ENCODE measurements at regions of chr11 and their contacts with region 1.

Region 1: DNA sequence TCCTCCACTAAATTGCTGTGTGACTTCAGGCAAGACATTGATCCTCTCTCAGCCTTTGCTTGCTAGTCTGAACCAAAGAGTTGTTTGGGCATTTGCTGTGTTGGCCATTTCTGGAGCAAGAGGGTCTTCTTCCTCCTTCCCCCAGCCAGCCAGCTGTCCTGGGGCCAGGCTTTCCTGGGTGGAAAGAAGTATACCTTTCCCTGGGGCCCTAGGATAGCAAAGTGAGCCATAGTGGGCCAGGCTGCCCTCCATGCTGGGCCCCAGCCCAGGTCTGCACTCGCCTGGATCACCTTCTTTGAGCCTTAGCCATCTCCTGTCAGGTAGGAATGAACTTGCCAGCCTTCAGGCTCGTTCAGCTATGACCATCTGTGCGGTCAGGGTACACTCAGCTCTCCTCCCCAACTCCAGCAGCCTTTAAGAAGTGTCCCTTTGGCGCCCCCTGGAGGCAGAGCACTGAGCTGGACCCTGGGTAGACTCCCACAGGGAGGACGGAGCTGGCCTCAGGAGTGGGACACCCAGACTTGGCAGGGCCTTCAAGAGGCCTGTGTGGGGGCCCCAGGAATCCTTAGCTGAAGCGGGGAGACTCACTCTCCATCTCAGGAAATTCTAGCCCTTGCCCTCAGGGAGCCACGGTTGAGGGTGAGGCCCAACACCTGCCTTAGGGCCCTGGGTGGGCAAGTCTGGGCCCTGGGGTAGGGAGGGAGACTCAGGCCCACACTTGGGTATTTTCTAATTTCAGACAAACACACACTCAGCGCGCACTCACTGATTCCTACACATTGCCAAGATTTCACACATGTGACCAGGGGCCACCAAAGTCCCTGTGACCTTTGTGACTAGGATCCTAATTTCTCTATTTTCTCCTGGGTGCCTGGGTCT is 35.6 kb upstream of the TPBGL start:
- DNase-seq: peak; percentile 95 to 97
- H3K4me3 ChIP-seq: no peak overlapping the region
- H3K4me3 Mint-ChIP-seq: no peak overlapping the region
- H3K27ac Mint-ChIP-seq: no peak overlapping the region
- H3K4me1 ChIP-seq: peaks cover 26% of the 10 kb centered on the region
- H3K4me1 Mint-ChIP-seq: peaks cover 16% of the 10 kb centered on the region
- H3K27me3 ChIP-seq: no peaks in the 10 kb centered on the region
- H3K27me3 Mint-ChIP-seq: no peaks in the 10 kb centered on the region
- CTCF ChIP-seq: peak; percentile 98 to 99

Region 2: GRCh38 chr11:75022759-75023396 is 182.0 kb before region 1 on chr11:
- CTCF ChIA-PET with region 1: interaction called, 16 read pairs
- POLR2A ChIA-PET with region 1: no interaction called
- intact Hi-C with region 1: loop called (anchors 1 kb)
- DNase-seq: peak; percentile 89 to 93
- H3K4me3 ChIP-seq: no peak overlapping the region
- H3K4me3 Mint-ChIP-seq: no peak overlapping the region
- H3K27ac Mint-ChIP-seq: no peak overlapping the region
- H3K4me1 ChIP-seq: no peaks in the 10 kb centered on the region
- H3K4me1 Mint-ChIP-seq: no peaks in the 10 kb centered on the region
- H3K27me3 ChIP-seq: no peaks in the 10 kb centered on the region
- H3K27me3 Mint-ChIP-seq: no peaks in the 10 kb centered on the region
- CTCF ChIP-seq: peak; percentile 99 to 100

Region 3: DNA sequence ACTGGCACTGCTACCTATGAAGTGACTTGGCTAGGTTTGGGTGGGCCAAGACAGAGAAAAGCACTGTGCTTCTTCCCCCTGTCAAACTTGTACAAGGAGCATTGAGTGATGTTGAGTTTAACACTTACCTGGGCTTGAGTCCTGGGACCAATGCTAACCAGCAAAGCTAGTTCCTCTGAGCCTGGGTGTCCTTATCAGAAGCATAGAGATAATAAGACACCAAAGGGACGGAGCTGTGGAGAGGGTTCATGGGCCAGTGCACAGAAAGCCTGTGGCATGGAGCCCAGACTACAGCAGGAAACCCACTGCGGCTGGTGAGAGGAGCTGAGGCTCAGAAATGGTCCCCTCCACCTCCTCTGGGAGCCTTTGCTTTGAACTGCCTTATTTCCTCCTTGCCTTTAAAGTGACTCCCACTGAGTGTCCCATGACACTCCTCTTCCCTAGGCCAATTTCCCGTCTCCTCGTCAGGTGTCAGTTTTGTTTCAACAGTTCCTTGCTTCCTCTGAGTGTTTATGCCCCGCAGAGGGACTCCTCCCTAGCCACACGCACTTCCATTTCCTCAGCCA is 44.6 kb before region 1 on chr11:
- CTCF ChIA-PET with region 1: interaction called, 101 read pairs
- POLR2A ChIA-PET with region 1: interaction called, 13 read pairs
- intact Hi-C with region 1: loop called (anchors 1 kb)
- DNase-seq: peak; percentile 61 to 75
- H3K4me3 ChIP-seq: peak overlapping the region; percentile 39
- H3K4me3 Mint-ChIP-seq: peak overlapping the region; percentile 84
- H3K27ac Mint-ChIP-seq: peak overlapping the region; percentile 97
- H3K4me1 ChIP-seq: peaks cover 98% of the 10 kb centered on the region
- H3K4me1 Mint-ChIP-seq: peaks cover 74% of the 10 kb centered on the region
- H3K27me3 ChIP-seq: no peaks in the 10 kb centered on the region
- H3K27me3 Mint-ChIP-seq: no peaks in the 10 kb centered on the region
- CTCF ChIP-seq: no peak

Region 4: DNA sequence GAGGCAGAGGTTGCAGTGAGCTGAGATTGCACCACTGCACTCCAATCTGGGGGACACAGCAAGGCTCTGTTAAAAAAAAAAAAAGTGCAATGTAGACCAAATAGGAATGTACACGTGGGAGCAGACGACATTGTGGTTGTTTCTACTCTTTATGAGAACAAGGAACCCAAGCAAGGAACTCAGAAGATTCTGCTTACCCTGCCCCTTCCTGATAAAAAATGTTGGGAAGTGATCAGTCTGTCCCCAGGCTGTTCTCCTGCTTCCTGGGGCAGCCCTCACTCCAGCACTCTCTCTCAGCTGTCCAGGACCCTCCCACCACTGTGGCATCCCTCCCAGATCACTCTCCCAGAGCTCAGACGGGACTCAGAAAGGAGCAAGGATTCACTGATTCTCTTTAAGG is 22.3 kb before region 1 on chr11:
- CTCF ChIA-PET with region 1: interaction called, 13 read pairs
- POLR2A ChIA-PET with region 1: no interaction called
- intact Hi-C with region 1: no loop called
- DNase-seq: no peak
- H3K4me3 ChIP-seq: no peak overlapping the region
- H3K4me3 Mint-ChIP-seq: no peak overlapping the region
- H3K27ac Mint-ChIP-seq: no peak overlapping the region
- H3K4me1 ChIP-seq: peaks cover 22% of the 10 kb centered on the region; the same call in 1 of the 2 replicates
- H3K4me1 Mint-ChIP-seq: peaks cover 22% of the 10 kb centered on the region
- H3K27me3 ChIP-seq: no peaks in the 10 kb centered on the region
- H3K27me3 Mint-ChIP-seq: no peaks in the 10 kb centered on the region
- CTCF ChIP-seq: no peak